Heart left ventricle (tissue), 16 donors: ENCODE measurements at regions of chr19 and their contacts with region 1.

Region 1: GRCh38 chr19:7680606-7681339 is at the start of gene TRAPPC5:
- DNase-seq: peak; percentile 84 to 94 (median 89)
- ATAC-seq: peak; percentile 52 to 88 (median 85)
- H3K4me3 ChIP-seq: peak within 1 kb of the TSS; percentile 71 to 100 (median 96)
- H3K27ac ChIP-seq: peak within 1 kb of the TSS; percentile 51 to 95 (median 86)
- H3K4me1 ChIP-seq: peaks cover 0 to 35% (median 8%) of the 10 kb centered on the region in 12 donors
- H3K27me3 ChIP-seq: peaks cover 0 to 30% (median 6%) of the 10 kb centered on the region in 9 donors
- CTCF ChIP-seq: peak; percentile 84 to 99 (median 98)
- POLR2A ChIP-seq: peak in 1 of 2 donors; percentile 86
- total RNA-seq, gene TRAPPC5: 65.9 to 124 (median 96.9) TPM

Region 2: GRCh38 chr19:7104747-7105447 is 575.9 kb before region 1 on chr19:
- intact Hi-C with region 1: loop called in 1 of 10 experiments (anchors 10 kb)
- DNase-seq: no peak
- ATAC-seq: peak in 2 of 4 donors; percentile 16 to 24
- H3K4me3 ChIP-seq: no peak overlapping the region
- H3K27ac ChIP-seq: no peak overlapping the region
- H3K4me1 ChIP-seq: peaks cover 0 to 5% (median 0%) of the 10 kb centered on the region in 12 donors
- H3K27me3 ChIP-seq: peaks cover 0 to 4% (median 0%) of the 10 kb centered on the region in 9 donors
- CTCF ChIP-seq: no peak
- POLR2A ChIP-seq: no peak

Region 3: DNA sequence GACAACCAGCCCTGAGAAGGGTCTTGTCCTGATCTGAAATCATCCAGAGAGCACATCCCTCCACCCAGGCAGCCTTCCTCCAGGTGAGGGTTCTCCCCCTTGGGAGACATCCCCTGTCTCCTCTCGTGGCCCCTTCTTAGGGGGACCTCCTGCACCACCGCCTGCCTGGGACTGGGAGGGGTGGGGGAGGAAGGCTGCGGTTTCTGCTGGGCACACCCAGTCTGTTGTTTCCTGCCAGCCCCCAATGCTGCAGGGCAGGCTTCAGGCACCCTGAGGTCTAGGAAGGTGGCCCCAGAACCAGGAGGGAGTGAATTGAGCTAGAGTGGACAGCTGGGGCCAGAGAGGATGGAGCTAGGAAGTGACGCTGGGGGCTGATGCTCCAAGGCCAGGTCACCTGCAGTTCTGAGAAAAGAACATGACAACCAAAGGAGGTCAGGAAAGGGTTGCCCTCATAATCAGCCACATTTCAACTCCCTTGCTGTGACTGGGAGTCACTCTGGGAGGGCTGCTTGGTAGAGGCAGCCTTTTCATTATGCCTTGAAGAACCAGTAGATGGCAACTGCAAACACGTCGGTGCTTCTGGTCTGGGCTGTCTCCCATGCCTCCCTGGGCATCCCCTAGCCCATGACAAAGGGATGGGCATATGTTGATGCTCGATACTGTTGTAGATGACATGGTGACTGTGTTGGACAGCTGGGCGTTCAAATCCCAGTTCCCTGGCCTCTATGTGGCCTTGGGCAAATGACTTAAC is 330.6 kb before region 1 on chr19:
- intact Hi-C with region 1: loop called in 7 of 10 experiments (anchors 2 to 10 kb)
- DNase-seq: no peak
- ATAC-seq: peak in 1 of 4 donors; percentile 14
- H3K4me3 ChIP-seq: peak overlapping the region in 2 of 12 donors; percentile 26 to 56
- H3K27ac ChIP-seq: peak overlapping the region in 1 of 12 donors; percentile 86
- H3K4me1 ChIP-seq: peaks cover 0 to 28% (median 0%) of the 10 kb centered on the region in 12 donors
- H3K27me3 ChIP-seq: no peaks in the 10 kb centered on the region
- CTCF ChIP-seq: no peak
- POLR2A ChIP-seq: no peak

Region 4: GRCh38 chr19:7355151-7355820 is 325.5 kb before region 1 on chr19:
- intact Hi-C with region 1: loop called in 7 of 10 experiments (anchors 2 to 10 kb)
- DNase-seq: no peak
- ATAC-seq: no peak
- H3K4me3 ChIP-seq: no peak overlapping the region
- H3K27ac ChIP-seq: peak overlapping the region in 1 of 12 donors; percentile 80
- H3K4me1 ChIP-seq: peaks cover 0 to 5% (median 0%) of the 10 kb centered on the region in 12 donors
- H3K27me3 ChIP-seq: peaks cover 0 to 6% (median 0%) of the 10 kb centered on the region in 9 donors
- CTCF ChIP-seq: no peak
- POLR2A ChIP-seq: no peak

Region 5: GRCh38 chr19:7562646-7563393 is 118.0 kb before region 1 on chr19:
- intact Hi-C with region 1: loop called in 8 of 10 experiments (anchors 1 to 5 kb)
- DNase-seq: no peak
- ATAC-seq: no peak
- H3K4me3 ChIP-seq: no peak overlapping the region
- H3K27ac ChIP-seq: no peak overlapping the region
- H3K4me1 ChIP-seq: no peaks in the 10 kb centered on the region
- H3K27me3 ChIP-seq: no peaks in the 10 kb centered on the region
- CTCF ChIP-seq: no peak
- POLR2A ChIP-seq: no peak

Region 6: DNA sequence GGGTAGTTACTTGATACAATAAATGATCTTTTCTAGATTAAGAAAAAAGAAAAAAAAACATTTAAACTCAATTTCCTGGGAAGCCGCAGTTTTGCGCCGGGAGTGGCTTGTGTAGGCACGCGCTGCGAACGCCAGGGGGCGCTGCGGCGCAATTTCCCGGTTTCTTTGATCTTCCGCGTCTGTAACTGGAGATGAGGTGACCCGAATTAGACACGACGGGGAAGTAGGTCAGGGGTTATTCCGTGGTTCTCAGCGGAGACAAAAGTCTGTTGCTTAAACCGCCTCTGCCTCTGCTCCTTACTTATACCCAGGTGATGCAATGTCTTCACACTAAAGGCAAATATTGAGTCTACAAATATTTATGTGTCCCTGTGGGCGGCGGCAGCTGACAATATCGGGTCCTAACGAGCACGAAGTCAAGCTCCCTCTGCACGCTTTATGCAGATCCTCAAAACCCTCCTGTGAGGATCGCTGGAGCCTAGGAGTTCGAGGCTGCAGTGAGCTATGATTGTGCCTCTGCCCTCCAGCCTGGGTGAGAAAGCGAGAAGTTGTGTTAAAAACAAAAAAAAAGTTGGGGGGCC is 28.6 kb before region 1 on chr19:
- intact Hi-C with region 1: loop called in 4 of 10 experiments (anchors 1 to 2 kb)
- DNase-seq: peak; percentile 74 to 92 (median 80)
- ATAC-seq: peak; percentile 58 to 88 (median 82)
- H3K4me3 ChIP-seq: peak overlapping the region in 9 of 12 donors; percentile 16 to 42 (median 25)
- H3K27ac ChIP-seq: peak overlapping the region in 2 of 12 donors; percentile 23 to 51
- H3K4me1 ChIP-seq: peaks cover 0 to 18% (median 0%) of the 10 kb centered on the region in 12 donors
- H3K27me3 ChIP-seq: peaks cover 0 to 6% (median 0%) of the 10 kb centered on the region in 9 donors
- CTCF ChIP-seq: peak; percentile 96 to 99 (median 98)
- POLR2A ChIP-seq: no peak

Region 7: GRCh38 chr19:7722231-7722651 is 41.5 kb after region 1 on chr19:
- intact Hi-C with region 1: no loop called
- DNase-seq: no peak
- ATAC-seq: no peak
- H3K4me3 ChIP-seq: no peak overlapping the region
- H3K27ac ChIP-seq: no peak overlapping the region
- H3K4me1 ChIP-seq: no peaks in the 10 kb centered on the region
- H3K27me3 ChIP-seq: peaks cover 0 to 26% (median 0%) of the 10 kb centered on the region in 9 donors
- CTCF ChIP-seq: no peak
- POLR2A ChIP-seq: no peak

Region 8: GRCh38 chr19:7799640-7800355 is 119.0 kb after region 1 on chr19:
- intact Hi-C with region 1: loop called in 4 of 10 experiments (anchors 5 to 10 kb)
- DNase-seq: peak; percentile 53 to 75 (median 64)
- ATAC-seq: peak in 3 of 4 donors; percentile 68 to 89 (median 79)
- H3K4me3 ChIP-seq: peak overlapping the region in 6 of 12 donors; percentile 4 to 33 (median 12)
- H3K27ac ChIP-seq: peak overlapping the region in 1 of 12 donors; percentile 11
- H3K4me1 ChIP-seq: peaks cover 0 to 8% (median 0%) of the 10 kb centered on the region in 12 donors
- H3K27me3 ChIP-seq: peaks cover 0 to 41% (median 16%) of the 10 kb centered on the region in 9 donors
- CTCF ChIP-seq: peak; percentile 29 to 68 (median 58)
- POLR2A ChIP-seq: no peak